H1 (cell line): ENCODE measurements at regions of chr1 and their contacts with region 1.

Region 1: GRCh38 chr1:15592285-15592684 is 7.4 kb upstream of the AGMAT start:
- DNase-seq: no peak
- H3K4me3 ChIP-seq: no peak overlapping the region
- H3K27ac ChIP-seq: no peak overlapping the region
- H3K4me1 ChIP-seq: peaks cover 0 to 5% (median 1%) of the 10 kb centered on the region in 4 experiments; a peak in 2 of 7 replicates
- H3K27me3 ChIP-seq: no peaks in the 10 kb centered on the region
- CTCF ChIP-seq: no peak
- EP300 ChIP-seq: no peak
- POLR2A ChIP-seq: no peak
- RAD21 ChIP-seq: no peak

Region 2: DNA sequence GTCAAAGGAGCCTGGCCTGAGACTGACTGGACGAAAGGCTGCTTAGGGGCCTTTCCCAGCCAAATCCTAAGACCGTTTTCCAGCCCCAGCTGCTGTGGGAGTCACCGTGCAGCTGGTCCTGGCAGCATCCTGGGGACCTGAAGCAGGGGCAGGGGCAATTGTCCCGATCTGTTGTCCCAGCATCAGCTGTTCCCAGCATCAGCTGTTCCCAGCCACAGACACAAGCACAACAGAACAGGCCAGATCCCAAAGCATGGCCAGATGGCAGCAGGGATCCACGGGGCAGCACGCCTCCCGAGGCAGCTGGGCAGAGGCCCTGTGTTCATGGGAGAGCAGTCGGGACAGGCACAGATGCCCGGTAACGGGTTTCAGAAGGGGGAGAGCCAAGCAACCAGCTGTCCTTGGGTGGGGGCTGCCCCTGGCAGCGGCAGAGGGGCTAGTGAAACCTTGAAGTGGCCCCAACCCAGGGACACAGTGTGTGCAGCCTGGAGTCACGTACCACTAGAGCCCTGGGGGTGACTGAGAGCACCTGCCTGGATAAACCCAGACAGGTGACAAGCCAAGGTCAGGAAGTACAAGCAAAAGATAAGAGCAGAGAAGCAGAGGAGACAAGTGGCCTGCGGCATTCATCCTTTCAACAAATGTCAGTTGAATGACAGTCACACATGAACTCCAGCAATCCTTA is 103.1 kb before region 1 on chr1:
- CTCF ChIA-PET with region 1: no interaction called
- POLR2A ChIA-PET with region 1: no interaction called
- DNase-seq: no peak
- H3K4me3 ChIP-seq: no peak overlapping the region
- H3K27ac ChIP-seq: no peak overlapping the region
- H3K4me1 ChIP-seq: no peaks in the 10 kb centered on the region
- H3K27me3 ChIP-seq: no peaks in the 10 kb centered on the region
- CTCF ChIP-seq: no peak
- EP300 ChIP-seq: no peak
- POLR2A ChIP-seq: no peak
- RAD21 ChIP-seq: no peak

Region 3: GRCh38 chr1:15501208-15502032 is 90.9 kb before region 1 on chr1:
- CTCF ChIA-PET with region 1: no interaction called
- POLR2A ChIA-PET with region 1: no interaction called
- DNase-seq: peak; percentile 27 to 90
- H3K4me3 ChIP-seq: no peak overlapping the region
- H3K27ac ChIP-seq: no peak overlapping the region
- H3K4me1 ChIP-seq: peaks cover 0 to 1% (median under 1%) of the 10 kb centered on the region in 4 experiments; a peak in 4 of 7 replicates
- H3K27me3 ChIP-seq: no peaks in the 10 kb centered on the region
- CTCF ChIP-seq: peak; percentile 76 to 97 (median 90)
- EP300 ChIP-seq: no peak
- POLR2A ChIP-seq: no peak
- RAD21 ChIP-seq: peak; percentile 64 to 79

Region 4: GRCh38 chr1:15741183-15741850 is 149.0 kb after region 1 on chr1:
- CTCF ChIA-PET with region 1: interaction called, 41 read pairs
- POLR2A ChIA-PET with region 1: interaction called, 3 read pairs
- DNase-seq: peak; percentile 61 to 91
- H3K4me3 ChIP-seq: no peak overlapping the region
- H3K27ac ChIP-seq: no peak overlapping the region
- H3K4me1 ChIP-seq: peaks cover 0 to 20% (median 6%) of the 10 kb centered on the region in 4 experiments; a peak in 5 of 7 replicates
- H3K27me3 ChIP-seq: no peaks in the 10 kb centered on the region
- CTCF ChIP-seq: peak in 2 of 3 experiments; percentile 91 to 98; a peak in 3 of 4 replicates
- EP300 ChIP-seq: no peak
- POLR2A ChIP-seq: no peak
- RAD21 ChIP-seq: peak; percentile 94 to 97